Activated CD4-positive, alpha-beta memory T cell treated with anti-CD3 and anti-CD28 coated beads for 36 hours (primary cell): ENCODE measurements at regions of chr5 and their contacts with region 1.

Region 1: GRCh38 chr5:72816311-72817145 is at the start of gene TNPO1:
- DNase-seq: peak; percentile 89
- H3K4me3 Mint-ChIP-seq: peak within 1 kb of the TSS; percentile 88
- H3K27ac Mint-ChIP-seq: peak within 1 kb of the TSS; percentile 85
- H3K4me1 Mint-ChIP-seq: peaks cover 16% of the 10 kb centered on the region
- H3K27me3 Mint-ChIP-seq: peaks cover 14% of the 10 kb centered on the region
- total RNA-seq, gene TNPO1: 92.0 to 95.4 TPM

Region 2: DNA sequence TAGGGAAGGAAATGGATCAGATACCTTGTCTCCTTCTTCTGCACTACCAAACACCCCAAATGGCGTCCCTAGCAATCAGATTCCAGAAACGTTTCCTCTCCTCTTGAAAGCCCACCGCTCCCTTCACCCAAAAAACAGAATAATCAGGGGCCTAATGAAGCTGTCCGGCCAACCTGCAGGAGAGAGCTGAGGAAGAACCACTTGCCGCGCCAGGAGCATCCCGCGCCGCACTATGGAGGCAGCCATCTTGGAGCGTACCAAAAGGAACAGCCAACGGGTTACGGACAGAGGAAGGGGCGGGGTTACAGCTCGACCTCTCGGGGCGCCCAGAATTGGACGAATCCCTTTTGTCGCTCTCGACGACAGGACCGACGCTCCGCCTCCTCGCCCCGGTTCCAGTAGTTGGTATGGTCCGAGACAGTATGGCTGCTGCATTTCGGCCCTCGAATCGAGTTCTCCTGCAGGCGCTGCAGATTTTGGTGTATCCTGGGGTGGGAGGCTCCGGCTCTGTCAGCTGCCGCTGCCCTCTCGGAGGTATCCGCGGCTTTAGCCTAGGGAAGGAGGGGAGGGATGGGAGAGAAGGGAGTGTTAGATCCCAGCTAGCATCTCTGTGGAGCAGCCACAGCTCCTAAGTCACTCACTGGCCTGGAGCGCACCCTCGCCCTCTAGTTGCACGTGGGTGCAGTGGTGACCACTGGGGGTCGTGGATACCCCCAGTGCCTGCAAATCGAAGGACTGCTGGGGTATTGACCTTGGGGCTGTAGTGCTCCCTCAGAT is 496.4 kb before region 1 on chr5 and contains the starts of genes MRPS27 and PTCD2:
- CTCF ChIA-PET with region 1: interaction called, 3 read pairs
- POLR2A ChIA-PET with region 1: interaction called, 8 read pairs
- intact Hi-C with region 1: loop called (anchors 2 kb)
- DNase-seq: peak; percentile 97
- H3K4me3 Mint-ChIP-seq: peak within 1 kb of the TSS; percentile 91
- H3K27ac Mint-ChIP-seq: peak within 1 kb of the TSS; percentile 85
- H3K4me1 Mint-ChIP-seq: peaks cover 32% of the 10 kb centered on the region
- H3K27me3 Mint-ChIP-seq: no peaks in the 10 kb centered on the region
- total RNA-seq, gene MRPS27: 85.9 to 91.4 TPM
- total RNA-seq, gene PTCD2: 10.8 to 12.1 TPM

Region 3: GRCh38 chr5:72366324-72366976 is 450.1 kb before region 1 on chr5:
- CTCF ChIA-PET with region 1: interaction called, 4 read pairs
- POLR2A ChIA-PET with region 1: no interaction called
- intact Hi-C with region 1: loop called (anchors 2 kb)
- DNase-seq: peak; percentile 38
- H3K4me3 Mint-ChIP-seq: no peak overlapping the region
- H3K27ac Mint-ChIP-seq: no peak overlapping the region
- H3K4me1 Mint-ChIP-seq: no peaks in the 10 kb centered on the region
- H3K27me3 Mint-ChIP-seq: no peaks in the 10 kb centered on the region

Region 4: GRCh38 chr5:72611118-72611730 is 205.3 kb before region 1 on chr5:
- CTCF ChIA-PET with region 1: interaction called, 57 read pairs
- POLR2A ChIA-PET with region 1: no interaction called
- intact Hi-C with region 1: loop called (anchors 1 kb)
- DNase-seq: peak; percentile 54
- H3K4me3 Mint-ChIP-seq: no peak overlapping the region
- H3K27ac Mint-ChIP-seq: no peak overlapping the region
- H3K4me1 Mint-ChIP-seq: no peaks in the 10 kb centered on the region
- H3K27me3 Mint-ChIP-seq: peaks cover 7% of the 10 kb centered on the region

Region 5: GRCh38 chr5:72829707-72830106 is 13.2 kb after region 1 on chr5:
- CTCF ChIA-PET with region 1: interaction called, 10 read pairs
- POLR2A ChIA-PET with region 1: no interaction called
- intact Hi-C with region 1: no loop called
- DNase-seq: no peak
- H3K4me3 Mint-ChIP-seq: no peak overlapping the region
- H3K27ac Mint-ChIP-seq: no peak overlapping the region
- H3K4me1 Mint-ChIP-seq: no peaks in the 10 kb centered on the region
- H3K27me3 Mint-ChIP-seq: no peaks in the 10 kb centered on the region

Region 6: GRCh38 chr5:72847989-72848473 is 31.5 kb after region 1 on chr5:
- CTCF ChIA-PET with region 1: interaction called, 20 read pairs
- POLR2A ChIA-PET with region 1: interaction called, 31 read pairs
- intact Hi-C with region 1: loop called (anchors 1 kb)
- DNase-seq: peak; percentile 91
- H3K4me3 Mint-ChIP-seq: peak overlapping the region; percentile 99
- H3K27ac Mint-ChIP-seq: peak overlapping the region; percentile 98
- H3K4me1 Mint-ChIP-seq: peaks cover 40% of the 10 kb centered on the region
- H3K27me3 Mint-ChIP-seq: no peaks in the 10 kb centered on the region

Region 7: DNA sequence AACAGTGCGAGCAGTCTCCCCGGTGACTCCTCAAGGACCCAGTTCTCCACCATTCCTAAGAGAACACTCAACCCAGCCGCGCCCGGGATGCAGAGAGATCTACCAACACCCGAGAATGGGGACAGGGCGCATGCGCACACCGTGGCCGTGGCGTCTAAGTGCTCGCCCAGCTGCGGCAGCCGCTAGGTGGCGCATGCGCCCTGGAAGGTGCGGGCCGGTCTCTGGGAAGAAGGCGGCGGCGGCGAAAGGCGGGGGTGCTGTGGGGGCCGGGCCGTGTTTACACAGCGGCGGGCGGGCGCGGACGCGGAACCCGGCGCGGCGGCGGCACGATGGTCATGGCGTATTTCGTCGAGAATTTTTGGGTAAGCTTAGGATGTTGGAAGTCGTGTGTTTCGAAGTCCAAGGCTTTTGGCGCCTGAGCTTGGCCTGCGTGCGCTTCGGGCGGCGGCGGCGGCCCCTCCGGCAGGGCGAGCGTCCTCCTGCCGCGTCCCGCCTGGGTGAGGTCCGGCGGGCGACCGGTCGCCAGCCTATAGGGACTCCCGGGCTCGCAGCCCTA is 139.3 kb after region 1 on chr5 and contains the start of gene FCHO2:
- CTCF ChIA-PET with region 1: no interaction called
- POLR2A ChIA-PET with region 1: no interaction called
- intact Hi-C with region 1: loop called (anchors 5 kb)
- DNase-seq: peak; percentile 95
- H3K4me3 Mint-ChIP-seq: peak within 1 kb of the TSS; percentile 87
- H3K27ac Mint-ChIP-seq: peak within 1 kb of the TSS; percentile 49
- H3K4me1 Mint-ChIP-seq: peaks cover 14% of the 10 kb centered on the region
- H3K27me3 Mint-ChIP-seq: peaks cover 43% of the 10 kb centered on the region
- total RNA-seq, gene FCHO2: 1.3 TPM